ENCODE measurements at regions of chr5 and their contacts with region 1.

Region 1: GRCh38 chr5:74673011-74673790 is 11.8 kb upstream of the HEXB start:
- DNase-seq: no peak
- H3K4me3 ChIP-seq: no peak overlapping the region
- H3K27ac ChIP-seq: no peak overlapping the region
- H3K27me3 ChIP-seq: no peaks in the 10 kb centered on the region
- CTCF ChIP-seq: peak; percentile 58

Region 2: GRCh38 chr5:74717596-74717995 is 44.4 kb after region 1 on chr5:
- CTCF ChIA-PET with region 1: interaction called, 12 read pairs
- POLR2A ChIA-PET with region 1: interaction called, 3 read pairs
- DNase-seq: no peak
- H3K4me3 ChIP-seq: no peak overlapping the region
- H3K27ac ChIP-seq: no peak overlapping the region
- H3K27me3 ChIP-seq: no peaks in the 10 kb centered on the region
- CTCF ChIP-seq: no peak

Region 3: GRCh38 chr5:74839229-74839628 is 166.0 kb after region 1 on chr5:
- CTCF ChIA-PET with region 1: no interaction called
- POLR2A ChIA-PET with region 1: no interaction called
- DNase-seq: no peak
- H3K4me3 ChIP-seq: no peak overlapping the region
- H3K27ac ChIP-seq: no peak overlapping the region
- H3K27me3 ChIP-seq: no peaks in the 10 kb centered on the region
- CTCF ChIP-seq: no peak

Region 4: GRCh38 chr5:74919487-74919886 is 246.3 kb after region 1 on chr5:
- CTCF ChIA-PET with region 1: interaction called, 26 read pairs
- POLR2A ChIA-PET with region 1: no interaction called
- DNase-seq: peak; percentile 18
- H3K4me3 ChIP-seq: no peak overlapping the region
- H3K27ac ChIP-seq: no peak overlapping the region
- H3K27me3 ChIP-seq: no peaks in the 10 kb centered on the region
- CTCF ChIP-seq: peak; percentile 66